Activated CD4-positive, alpha-beta T cell treated with anti-CD3 and anti-CD28 coated beads, Interleukin-2, amount 10 ng/mL, durations not matched to agents 24 days and 14 days (primary cell): ENCODE measurements at regions of chr18 and their contacts with region 1.

Region 1: DNA sequence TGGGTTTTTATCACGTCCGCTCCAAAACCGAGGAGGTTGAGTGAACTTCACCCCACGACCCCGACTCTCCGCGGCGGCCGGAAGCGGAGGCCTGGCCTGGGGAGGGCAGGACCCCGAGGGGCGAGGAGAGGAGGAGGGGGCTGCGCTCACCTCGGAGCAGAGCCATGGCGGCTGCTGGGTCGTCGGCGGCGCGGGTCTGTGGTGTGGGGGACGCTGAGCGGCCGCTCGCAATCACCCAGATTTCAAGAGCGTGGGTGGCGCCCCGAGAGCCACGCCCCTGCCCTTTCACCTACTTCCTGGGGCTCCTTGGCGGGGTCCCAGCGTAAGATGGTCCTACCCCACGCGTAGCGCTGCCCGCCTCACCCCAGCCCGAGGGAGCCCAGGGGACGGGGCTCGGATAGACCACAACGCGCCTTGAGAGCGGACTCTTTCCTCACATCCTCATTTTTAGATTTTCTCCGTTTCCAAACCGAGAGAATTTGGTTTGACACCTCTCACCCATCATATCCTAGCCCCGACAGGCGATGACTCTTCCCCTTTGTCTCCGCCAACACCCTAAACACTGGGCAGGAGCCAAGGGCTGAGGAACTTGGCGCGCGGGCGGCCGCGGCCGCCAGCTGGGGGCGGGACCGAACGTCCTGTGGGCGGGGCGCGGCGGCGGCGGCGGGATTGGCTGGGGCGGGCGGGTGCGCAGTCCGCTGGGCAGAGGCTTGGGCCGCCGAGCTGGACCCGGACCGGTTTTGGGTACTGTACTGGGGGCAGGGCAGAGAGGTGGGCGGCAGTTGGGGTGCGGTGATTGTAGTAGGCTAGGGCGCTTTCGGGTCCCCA is at the start of gene ACAA2:
- DNase-seq: peak; percentile 95
- H3K4me3 Mint-ChIP-seq: peak within 1 kb of the TSS; percentile 91
- H3K27ac Mint-ChIP-seq: peak within 1 kb of the TSS; percentile 95
- H3K4me1 Mint-ChIP-seq: peaks cover 54% of the 10 kb centered on the region
- H3K27me3 Mint-ChIP-seq: no peaks in the 10 kb centered on the region
- total RNA-seq, gene ACAA2: 69.7 and 72.1 TPM in 2 replicates

Region 2: GRCh38 chr18:49486953-49487710 is 326.4 kb before region 1 on chr18 and contains the start of gene C18orf32:
- intact Hi-C with region 1: loop called (anchors 1 kb)
- DNase-seq: peak; percentile 98
- H3K4me3 Mint-ChIP-seq: peak within 1 kb of the TSS; percentile 89
- H3K27ac Mint-ChIP-seq: peak within 1 kb of the TSS; percentile 94
- H3K4me1 Mint-ChIP-seq: peaks cover 42% of the 10 kb centered on the region
- H3K27me3 Mint-ChIP-seq: no peaks in the 10 kb centered on the region
- total RNA-seq, gene C18orf32: 20.4 and 26.1 TPM in 2 replicates

Region 3: GRCh38 chr18:49784427-49785185 is 28.9 kb before region 1 on chr18:
- intact Hi-C with region 1: loop called (anchors 1 kb)
- DNase-seq: no peak
- H3K4me3 Mint-ChIP-seq: no peak overlapping the region
- H3K27ac Mint-ChIP-seq: no peak overlapping the region
- H3K4me1 Mint-ChIP-seq: peaks cover 27% of the 10 kb centered on the region
- H3K27me3 Mint-ChIP-seq: no peaks in the 10 kb centered on the region

Region 4: GRCh38 chr18:49858309-49859020 is 44.9 kb after region 1 on chr18:
- intact Hi-C with region 1: loop called (anchors 5 kb)
- DNase-seq: peak; percentile 89
- H3K4me3 Mint-ChIP-seq: no peak overlapping the region
- H3K27ac Mint-ChIP-seq: no peak overlapping the region
- H3K4me1 Mint-ChIP-seq: peaks cover 2% of the 10 kb centered on the region
- H3K27me3 Mint-ChIP-seq: no peaks in the 10 kb centered on the region

Region 5: DNA sequence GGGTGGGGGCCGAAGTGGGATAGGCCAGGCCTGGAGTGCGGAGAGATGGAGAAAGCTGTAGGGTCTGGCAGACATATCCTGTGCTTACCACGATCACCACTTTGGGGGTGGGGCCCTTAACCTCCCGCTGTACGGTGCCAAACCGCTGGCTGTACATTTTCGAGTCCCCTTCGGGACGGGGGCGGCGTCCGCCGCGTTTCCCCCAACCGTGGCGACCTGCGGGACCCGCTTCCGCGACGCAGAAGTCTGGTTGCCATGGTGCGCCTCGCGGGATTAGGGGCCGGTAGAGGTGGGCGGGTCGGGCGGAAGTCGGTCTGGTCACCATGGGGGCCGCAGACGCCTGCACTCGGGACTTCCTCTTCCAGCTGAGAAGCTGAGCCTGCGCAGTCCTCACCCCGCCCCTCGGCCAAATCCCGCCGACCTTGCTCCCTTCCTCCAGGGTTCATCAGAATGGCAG is 452.7 kb after region 1 on chr18 and contains the start of gene CFAP53:
- intact Hi-C with region 1: loop called (anchors 5 kb)
- DNase-seq: peak; percentile 95
- H3K4me3 Mint-ChIP-seq: peak within 1 kb of the TSS; percentile 83
- H3K27ac Mint-ChIP-seq: peak within 1 kb of the TSS; percentile 78
- H3K4me1 Mint-ChIP-seq: peaks cover 20% of the 10 kb centered on the region
- H3K27me3 Mint-ChIP-seq: peaks cover 6% of the 10 kb centered on the region
- total RNA-seq, gene CFAP53: 0.38 and 0.63 TPM in 2 replicates

Region 6: GRCh38 chr18:50374753-50375391 is 561.3 kb after region 1 on chr18 and contains the start of gene SKA1:
- intact Hi-C with region 1: loop called (anchors 1 kb)
- DNase-seq: peak; percentile 98
- H3K4me3 Mint-ChIP-seq: peak within 1 kb of the TSS; percentile 90
- H3K27ac Mint-ChIP-seq: peak within 1 kb of the TSS; percentile 89
- H3K4me1 Mint-ChIP-seq: peaks cover 15% of the 10 kb centered on the region
- H3K27me3 Mint-ChIP-seq: peaks cover 6% of the 10 kb centered on the region
- total RNA-seq, gene SKA1: 20.0 and 22.1 TPM in 2 replicates